HEK293 (cell line): ENCODE measurements at regions of chr14 and their contacts with region 1.

Region 1: DNA sequence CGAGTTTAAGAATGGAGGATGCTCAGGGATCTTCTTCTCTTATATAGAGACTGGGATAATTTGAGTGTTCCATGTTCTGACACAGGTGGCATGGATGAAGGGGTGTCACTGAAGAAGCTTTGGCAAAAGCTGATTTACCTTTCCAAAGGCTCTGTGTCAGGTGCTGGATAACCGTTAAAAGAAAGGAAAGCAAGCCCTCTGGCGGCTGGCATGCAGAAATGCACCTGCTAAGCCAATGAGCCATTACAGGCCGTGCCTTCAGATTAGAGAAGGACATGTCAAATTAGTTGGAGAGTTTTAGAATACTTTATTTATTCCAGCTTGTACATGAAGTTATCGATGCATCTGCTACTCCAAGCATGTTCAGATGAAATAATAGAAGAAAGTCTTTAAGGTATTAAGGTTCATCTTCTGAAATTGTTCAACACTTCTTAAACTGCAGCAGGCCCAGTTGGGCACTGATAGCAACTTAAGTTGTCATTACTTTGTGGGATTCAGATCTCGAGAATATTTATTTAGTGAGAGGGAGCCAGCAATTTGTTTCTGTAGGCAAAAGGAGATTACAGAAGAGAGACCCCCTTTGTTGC is 678.2 kb downstream of the NRXN3 start:
- H3K4me3 ChIP-seq: no peak overlapping the region
- H3K27ac ChIP-seq: no peak overlapping the region
- H3K4me1 ChIP-seq: no peaks in the 10 kb centered on the region
- CTCF ChIP-seq: no peak

Region 2: GRCh38 chr14:78746086-78746595 is 102.2 kb before region 1 on chr14:
- CTCF ChIA-PET with region 1: no interaction called
- POLR2A ChIA-PET with region 1: no interaction called
- H3K4me3 ChIP-seq: no peak overlapping the region
- H3K27ac ChIP-seq: no peak overlapping the region
- H3K4me1 ChIP-seq: no peaks in the 10 kb centered on the region
- CTCF ChIP-seq: no peak

Region 3: DNA sequence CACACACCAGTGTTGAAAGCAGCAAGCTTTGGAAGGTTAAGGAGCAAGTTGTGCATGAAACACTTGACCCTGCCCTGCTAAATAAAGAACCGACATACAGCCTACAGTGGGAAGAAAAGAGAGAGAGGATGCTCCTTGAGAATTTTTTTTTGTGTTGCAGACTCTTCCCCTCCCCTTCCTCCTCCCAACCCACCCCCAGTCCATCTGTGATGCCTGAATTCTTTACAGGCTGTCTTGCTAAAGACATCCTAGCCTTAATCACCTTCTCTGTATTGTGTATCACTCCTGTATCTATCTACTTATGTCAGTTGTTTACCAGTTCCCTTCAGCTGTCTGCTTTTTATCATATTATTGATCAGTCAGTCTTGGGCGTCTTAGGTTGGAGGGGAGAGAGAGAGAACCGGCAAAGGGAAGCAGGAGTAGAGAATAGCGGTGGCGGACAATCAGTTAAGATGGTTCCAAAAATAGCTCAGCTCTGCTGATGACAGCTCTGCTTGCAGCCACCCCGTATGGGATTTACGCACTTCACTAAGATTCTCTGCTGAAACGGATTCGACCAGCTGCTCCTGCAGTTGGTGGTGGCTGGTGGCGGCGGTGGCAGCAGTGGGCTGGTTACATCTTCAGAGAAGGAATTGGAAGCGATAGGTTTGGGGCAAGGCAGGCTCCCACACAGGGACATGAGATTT is 13.4 kb before region 1 on chr14:
- CTCF ChIA-PET with region 1: interaction called, 16 read pairs
- POLR2A ChIA-PET with region 1: no interaction called
- H3K4me3 ChIP-seq: no peak overlapping the region
- H3K27ac ChIP-seq: no peak overlapping the region
- H3K4me1 ChIP-seq: no peaks in the 10 kb centered on the region
- CTCF ChIP-seq: no peak